ENCODE measurements at regions of chr12 and their contacts with region 1.

Region 1: GRCh38 chr12:122752464-122753318 is at the start of gene DENR:
- DNase-seq: peak; percentile 100
- H3K4me3 Mint-ChIP-seq: peak within 1 kb of the TSS; percentile 91
- H3K27ac Mint-ChIP-seq: peak within 1 kb of the TSS; percentile 92
- H3K4me1 Mint-ChIP-seq: peaks cover 54% of the 10 kb centered on the region
- H3K27me3 Mint-ChIP-seq: no peaks in the 10 kb centered on the region
- total RNA-seq, gene DENR: 87.6 and 88.7 TPM in 2 replicates

Region 2: DNA sequence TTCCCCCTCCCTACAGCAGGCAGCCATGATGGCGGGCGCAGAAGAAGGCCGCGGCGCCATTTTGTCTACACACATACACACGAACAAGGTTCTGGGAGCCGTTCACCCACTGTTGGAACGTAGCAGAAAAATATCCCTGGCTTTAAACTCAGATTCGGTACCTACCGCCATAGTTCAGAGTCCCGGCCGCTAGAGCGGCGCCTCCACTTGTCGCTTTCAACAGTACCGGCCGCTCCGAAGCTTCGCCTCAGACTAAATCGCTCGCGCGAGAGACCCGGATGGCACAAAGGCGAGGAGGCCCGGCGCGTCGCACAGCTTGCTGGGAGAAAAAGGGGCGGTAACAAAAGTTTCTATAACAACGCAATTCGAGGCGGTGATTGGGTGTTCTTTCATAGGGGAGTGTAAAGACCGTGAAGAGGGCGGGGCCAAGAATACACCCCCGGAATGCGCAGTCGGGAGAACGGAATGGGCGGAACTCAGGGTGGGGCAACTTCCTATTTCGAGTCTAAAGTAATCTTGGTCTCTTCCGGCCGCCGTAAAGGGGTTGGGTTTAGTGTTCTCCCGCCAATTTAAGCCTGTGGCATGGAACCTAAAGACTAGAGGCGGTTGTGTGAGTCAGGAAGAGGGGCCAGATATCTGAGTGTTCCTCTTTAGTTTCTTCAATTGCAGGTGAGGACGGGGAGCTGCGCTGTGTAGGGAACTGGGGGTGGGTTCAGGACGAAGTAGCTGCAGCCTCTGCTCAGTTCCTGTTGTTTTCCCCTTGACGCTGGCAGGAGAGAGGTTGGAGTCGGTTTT is 225.8 kb before region 1 on chr12 and contains the starts of genes KNTC1 and RSRC2:
- intact Hi-C with region 1: loop called (anchors 1 kb)
- DNase-seq: peak; percentile 99
- H3K4me3 Mint-ChIP-seq: no peak within 1 kb of the TSS
- H3K27ac Mint-ChIP-seq: no peak within 1 kb of the TSS
- H3K4me1 Mint-ChIP-seq: peaks cover 43% of the 10 kb centered on the region
- H3K27me3 Mint-ChIP-seq: no peaks in the 10 kb centered on the region
- total RNA-seq, gene KNTC1: 122 and 126 TPM in 2 replicates
- total RNA-seq, gene RSRC2: 101 and 103 TPM in 2 replicates

Region 3: GRCh38 chr12:122646517-122647217 is 106.0 kb before region 1 on chr12:
- intact Hi-C with region 1: loop called (anchors 1 kb)
- DNase-seq: peak; percentile 31
- H3K4me3 Mint-ChIP-seq: peak overlapping the region; percentile 34
- H3K27ac Mint-ChIP-seq: peak overlapping the region; percentile 84
- H3K4me1 Mint-ChIP-seq: peaks cover 20% of the 10 kb centered on the region
- H3K27me3 Mint-ChIP-seq: no peaks in the 10 kb centered on the region

Region 4: DNA sequence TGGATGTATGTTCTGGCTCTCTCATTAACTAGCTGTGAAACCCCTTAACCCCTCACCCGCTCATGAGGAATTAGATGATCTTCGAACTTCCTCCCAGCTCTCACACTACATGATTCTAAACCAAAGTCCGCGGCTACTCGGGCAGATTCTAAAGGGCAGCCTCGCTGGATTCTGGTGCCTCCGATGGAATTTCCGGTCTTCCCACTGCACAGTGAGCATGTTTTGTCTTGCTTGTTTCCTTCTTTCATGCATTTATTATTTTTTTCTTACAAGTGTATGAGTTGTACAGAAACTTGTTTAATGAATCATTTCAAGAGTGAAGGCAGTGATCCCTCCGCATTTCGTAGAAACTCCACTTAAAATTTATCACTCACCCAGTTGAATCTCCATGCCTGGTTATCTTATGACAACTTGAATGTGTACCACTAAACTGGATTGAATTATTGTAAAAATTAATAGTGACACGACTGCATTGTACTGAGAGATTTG is 31.6 kb before region 1 on chr12:
- intact Hi-C with region 1: loop called (anchors 1 kb)
- DNase-seq: no peak
- H3K4me3 Mint-ChIP-seq: peak overlapping the region; percentile 45
- H3K27ac Mint-ChIP-seq: peak overlapping the region; percentile 86
- H3K4me1 Mint-ChIP-seq: peaks cover 40% of the 10 kb centered on the region
- H3K27me3 Mint-ChIP-seq: no peaks in the 10 kb centered on the region

Region 5: GRCh38 chr12:123062681-123063486 is 310.2 kb after region 1 on chr12:
- intact Hi-C with region 1: no loop called
- DNase-seq: no peak
- H3K4me3 Mint-ChIP-seq: no peak overlapping the region
- H3K27ac Mint-ChIP-seq: peak overlapping the region; percentile 44
- H3K4me1 Mint-ChIP-seq: peaks cover 20% of the 10 kb centered on the region
- H3K27me3 Mint-ChIP-seq: no peaks in the 10 kb centered on the region